ENCODE measurements at regions of chr12 and their contacts with region 1.

Region 1: DNA sequence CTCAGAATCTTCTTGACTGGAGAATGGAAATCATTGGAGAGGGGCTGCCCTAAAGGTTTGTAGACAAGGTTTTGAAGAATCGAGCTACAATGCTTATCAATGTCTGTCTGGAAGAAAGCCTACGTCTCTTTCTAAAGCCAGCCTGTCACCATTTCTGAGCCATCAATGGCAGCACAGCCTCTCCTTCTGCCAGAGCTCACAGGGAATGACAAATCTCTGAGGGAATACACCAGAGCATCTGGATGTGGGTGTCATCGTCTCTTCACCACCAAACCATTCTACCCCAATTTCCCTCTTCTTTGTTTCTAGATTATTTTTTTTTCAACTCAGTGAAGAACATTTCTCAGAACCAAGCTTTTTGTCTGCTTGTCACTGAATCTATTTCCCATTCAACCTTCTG is 349.7 kb downstream of the EMP1 start:
- DNase-seq: no peak
- CTCF ChIP-seq: no peak

Region 2: GRCh38 chr12:13534645-13535398 is 11.4 kb before region 1 on chr12:
- CTCF ChIA-PET with region 1: interaction called, 25 read pairs
- POLR2A ChIA-PET with region 1: no interaction called
- DNase-seq: peak; percentile 15
- CTCF ChIP-seq: peak; percentile 60

Region 3: GRCh38 chr12:13570005-13570694 is 23.9 kb after region 1 on chr12:
- CTCF ChIA-PET with region 1: no interaction called
- POLR2A ChIA-PET with region 1: no interaction called
- DNase-seq: no peak
- CTCF ChIP-seq: no peak